Endothelial cell of umbilical vein (primary cell): ENCODE measurements at regions of chr20 and their contacts with region 1.

Region 1: GRCh38 chr20:41339507-41340326 is 904 bp upstream of the LPIN3 start:
- DNase-seq: peak; percentile 62
- H3K4me3 ChIP-seq: peak overlapping the region; percentile 18 to 65 (median 20)
- H3K27ac ChIP-seq: no peak overlapping the region
- H3K4me1 ChIP-seq: peaks cover 17% of the 10 kb centered on the region
- H3K27me3 ChIP-seq: no peaks in the 10 kb centered on the region
- CTCF ChIP-seq: peak; percentile 93 to 97
- POLR2A ChIP-seq: no peak

Region 2: GRCh38 chr20:39745380-39745779 is 1594.3 kb before region 1 on chr20:
- CTCF ChIA-PET with region 1: no interaction called
- POLR2A ChIA-PET with region 1: no interaction called
- dilution Hi-C with region 1: no loop called
- intact Hi-C with region 1: no loop called
- DNase-seq: peak; percentile 54
- H3K4me3 ChIP-seq: no peak overlapping the region
- H3K27ac ChIP-seq: no peak overlapping the region
- H3K4me1 ChIP-seq: no peaks in the 10 kb centered on the region
- H3K27me3 ChIP-seq: no peaks in the 10 kb centered on the region
- CTCF ChIP-seq: no peak
- POLR2A ChIP-seq: no peak

Region 3: GRCh38 chr20:41182296-41183212 is 157.2 kb before region 1 on chr20:
- CTCF ChIA-PET with region 1: interaction called, 295 read pairs
- POLR2A ChIA-PET with region 1: no interaction called
- dilution Hi-C with region 1: no loop called
- intact Hi-C with region 1: no loop called
- DNase-seq: no peak
- H3K4me3 ChIP-seq: no peak overlapping the region
- H3K27ac ChIP-seq: no peak overlapping the region
- H3K4me1 ChIP-seq: peaks cover under 1% of the 10 kb centered on the region
- H3K27me3 ChIP-seq: no peaks in the 10 kb centered on the region
- CTCF ChIP-seq: no peak
- POLR2A ChIP-seq: no peak

Region 4: DNA sequence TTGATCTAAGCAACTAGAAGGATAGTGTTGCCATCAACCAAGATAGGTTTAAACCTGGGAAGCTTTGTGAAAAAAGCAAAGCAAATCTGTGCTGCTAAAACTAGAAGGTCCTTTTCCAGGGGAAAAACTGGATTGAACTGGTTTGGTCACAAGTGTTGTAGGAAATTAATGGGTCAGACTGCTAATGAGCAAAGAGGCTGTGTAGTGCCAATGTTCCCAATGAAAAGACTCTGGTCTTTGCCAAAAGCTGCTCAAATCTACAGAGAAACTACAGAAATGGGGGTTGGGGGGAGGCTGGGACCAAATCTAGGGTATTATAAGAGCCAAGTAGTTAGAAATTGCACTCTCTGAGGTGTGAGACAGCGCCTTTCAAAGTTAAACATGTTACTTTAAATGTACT is 117.4 kb before region 1 on chr20:
- CTCF ChIA-PET with region 1: interaction called, 14 read pairs
- POLR2A ChIA-PET with region 1: no interaction called
- dilution Hi-C with region 1: no loop called
- intact Hi-C with region 1: no loop called
- DNase-seq: no peak
- H3K4me3 ChIP-seq: no peak overlapping the region
- H3K27ac ChIP-seq: no peak overlapping the region
- H3K4me1 ChIP-seq: no peaks in the 10 kb centered on the region
- H3K27me3 ChIP-seq: no peaks in the 10 kb centered on the region
- CTCF ChIP-seq: no peak
- POLR2A ChIP-seq: no peak

Region 5: GRCh38 chr20:41249406-41250281 is 90.1 kb before region 1 on chr20:
- CTCF ChIA-PET with region 1: interaction called, 49 read pairs
- POLR2A ChIA-PET with region 1: no interaction called
- dilution Hi-C with region 1: no loop called
- intact Hi-C with region 1: loop called (anchors 1 kb)
- DNase-seq: peak; percentile 92
- H3K4me3 ChIP-seq: peak overlapping the region in 1 of 3 experiments; percentile 63
- H3K27ac ChIP-seq: peak overlapping the region; percentile 99
- H3K4me1 ChIP-seq: peaks cover 67% of the 10 kb centered on the region
- H3K27me3 ChIP-seq: no peaks in the 10 kb centered on the region
- CTCF ChIP-seq: peak in 1 of 2 donors; percentile 34
- POLR2A ChIP-seq: peak; percentile 12

Region 6: GRCh38 chr20:41329435-41330342 is 10.0 kb before region 1 on chr20:
- CTCF ChIA-PET with region 1: interaction called, 26 read pairs
- POLR2A ChIA-PET with region 1: interaction called, 13 read pairs
- dilution Hi-C with region 1: no loop called
- intact Hi-C with region 1: no loop called
- DNase-seq: peak; percentile 94
- H3K4me3 ChIP-seq: no peak overlapping the region
- H3K27ac ChIP-seq: peak overlapping the region; percentile 89
- H3K4me1 ChIP-seq: peaks cover 20% of the 10 kb centered on the region
- H3K27me3 ChIP-seq: no peaks in the 10 kb centered on the region
- CTCF ChIP-seq: no peak
- POLR2A ChIP-seq: peak; percentile 66